Activated B cell treated with CpG ODN at 0.5 μM for 24 hours (primary cell): ENCODE measurements at regions of chr2 and their contacts with region 1.

Region 1: DNA sequence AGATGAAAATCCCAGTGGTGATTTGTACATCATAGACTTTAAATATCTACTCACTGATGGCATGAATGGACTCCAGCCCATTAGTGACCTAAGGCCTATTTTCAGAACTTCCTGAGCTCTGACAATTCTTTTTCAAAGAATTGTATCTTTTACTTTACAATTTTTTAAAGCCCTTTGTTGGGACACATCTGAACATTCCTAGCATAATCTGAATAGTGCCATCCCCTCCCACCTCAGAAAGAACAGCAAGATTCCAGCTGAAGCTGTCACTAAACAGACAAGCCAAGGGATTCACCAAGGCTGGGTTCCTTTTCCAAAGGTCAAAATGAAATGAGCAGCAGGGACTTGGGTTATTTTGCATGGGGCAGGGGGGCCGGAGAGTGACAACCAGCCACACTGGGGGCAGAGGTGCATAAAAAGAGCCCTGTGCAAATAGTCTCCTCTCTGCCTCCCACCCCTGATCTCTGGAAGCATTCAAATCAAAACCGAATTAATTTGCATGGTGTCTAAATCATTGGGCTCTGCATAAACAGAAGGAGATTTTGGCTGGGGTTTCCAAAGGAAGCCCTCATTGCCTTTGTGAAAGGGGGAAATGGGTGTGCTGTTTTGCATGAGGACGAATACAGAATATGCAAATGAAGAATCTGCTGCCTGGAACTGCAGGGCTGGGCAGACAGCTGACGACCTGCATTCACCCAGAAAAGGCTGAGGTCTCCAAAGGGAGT is 17.2 kb downstream of the EPHA4 start:
- DNase-seq: no peak
- ATAC-seq: peak; percentile 92
- H3K4me3 Mint-ChIP-seq: peak overlapping the region; percentile 68
- H3K27ac Mint-ChIP-seq: peak overlapping the region; percentile 91
- H3K4me1 Mint-ChIP-seq: peaks cover 73% of the 10 kb centered on the region
- H3K27me3 Mint-ChIP-seq: no peaks in the 10 kb centered on the region
- CTCF ChIP-seq: no peak

Region 2: DNA sequence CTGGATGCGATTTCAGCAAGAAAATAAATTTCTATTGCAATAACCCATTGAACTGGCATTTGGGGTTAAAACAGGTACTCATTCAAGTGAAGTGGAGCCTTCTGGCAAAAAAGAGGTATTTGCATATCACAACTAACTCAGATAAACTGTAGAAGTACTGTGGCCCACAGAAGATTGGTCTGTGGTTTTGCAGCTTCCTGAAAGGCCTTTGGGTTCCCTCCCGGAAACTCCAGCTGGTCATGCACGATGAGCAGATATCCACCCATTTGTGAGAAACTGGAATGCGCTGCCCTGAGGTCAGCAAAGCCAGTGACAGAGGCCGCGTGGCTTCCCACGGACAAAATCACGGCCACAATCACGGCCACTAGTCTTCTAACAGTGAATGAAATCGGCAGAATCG is 89.2 kb before region 1 on chr2:
- CTCF ChIA-PET with region 1: no interaction called
- POLR2A ChIA-PET with region 1: interaction called, 4 read pairs
- intact Hi-C with region 1: loop called (anchors 1 kb)
- DNase-seq: peak; percentile 16
- ATAC-seq: peak; percentile 82
- H3K4me3 Mint-ChIP-seq: peak overlapping the region; percentile 71
- H3K27ac Mint-ChIP-seq: peak overlapping the region; percentile 72
- H3K4me1 Mint-ChIP-seq: peaks cover 60% of the 10 kb centered on the region
- H3K27me3 Mint-ChIP-seq: no peaks in the 10 kb centered on the region
- CTCF ChIP-seq: no peak

Region 3: GRCh38 chr2:221517696-221518151 is 37.2 kb before region 1 on chr2:
- CTCF ChIA-PET with region 1: interaction called, 3 read pairs
- POLR2A ChIA-PET with region 1: interaction called, 14 read pairs
- intact Hi-C with region 1: loop called (anchors 1 kb)
- DNase-seq: peak; percentile 32
- ATAC-seq: peak; percentile 76
- H3K4me3 Mint-ChIP-seq: no peak overlapping the region
- H3K27ac Mint-ChIP-seq: no peak overlapping the region
- H3K4me1 Mint-ChIP-seq: peaks cover 14% of the 10 kb centered on the region
- H3K27me3 Mint-ChIP-seq: no peaks in the 10 kb centered on the region
- CTCF ChIP-seq: no peak

Region 4: DNA sequence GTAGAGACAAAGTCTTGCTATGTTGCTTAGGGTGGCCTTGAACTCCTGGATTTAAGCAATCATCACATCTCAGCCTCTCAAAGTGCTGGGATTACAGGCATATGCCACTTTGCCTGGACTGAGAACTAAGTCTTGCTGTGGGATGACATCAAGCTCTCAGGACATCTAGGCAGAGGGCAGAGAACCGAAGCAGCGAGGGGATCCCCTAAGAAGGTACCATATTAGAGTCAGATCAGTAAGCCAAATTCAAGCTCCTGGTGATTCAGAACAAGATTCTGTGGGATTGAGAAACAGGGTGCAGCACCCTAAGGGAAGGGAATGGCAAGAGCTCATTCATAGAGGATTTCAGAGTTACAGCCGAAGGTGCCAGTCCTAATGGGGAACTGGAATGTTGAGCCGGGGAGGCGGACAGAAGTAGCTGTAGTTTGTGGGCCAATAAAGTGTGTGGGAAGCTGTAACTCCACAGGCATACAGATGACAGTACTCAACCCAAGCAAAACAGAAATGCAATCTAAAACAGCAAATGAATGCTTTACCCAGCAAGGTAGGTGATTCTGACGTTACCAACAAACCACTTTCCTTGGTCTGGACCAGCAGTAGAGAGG is 13.7 kb before region 1 on chr2:
- CTCF ChIA-PET with region 1: interaction called, 4 read pairs
- POLR2A ChIA-PET with region 1: interaction called, 11 read pairs
- intact Hi-C with region 1: no loop called
- DNase-seq: no peak
- ATAC-seq: no peak
- H3K4me3 Mint-ChIP-seq: no peak overlapping the region
- H3K27ac Mint-ChIP-seq: no peak overlapping the region
- H3K4me1 Mint-ChIP-seq: peaks cover 15% of the 10 kb centered on the region
- H3K27me3 Mint-ChIP-seq: no peaks in the 10 kb centered on the region
- CTCF ChIP-seq: no peak